Breast epithelium (tissue), 4 donors: ENCODE measurements at regions of chr6 and their contacts with region 1.

Region 1: GRCh38 chr6:29131691-29132090 is 23.8 kb downstream of the OR2J3 start:
- DNase-seq: no peak
- H3K4me3 ChIP-seq: no peak overlapping the region
- H3K27ac ChIP-seq: no peak overlapping the region
- H3K4me1 ChIP-seq: no peaks in the 10 kb centered on the region
- H3K27me3 ChIP-seq: no peaks in the 10 kb centered on the region
- CTCF ChIP-seq: no peak
- POLR2A ChIP-seq: no peak

Region 2: GRCh38 chr6:29146154-29146553 is 14.5 kb after region 1 on chr6:
- intact Hi-C with region 1: loop called (anchors 1 kb)
- DNase-seq: no peak
- H3K4me3 ChIP-seq: no peak overlapping the region
- H3K27ac ChIP-seq: no peak overlapping the region
- H3K4me1 ChIP-seq: no peaks in the 10 kb centered on the region
- H3K27me3 ChIP-seq: no peaks in the 10 kb centered on the region
- CTCF ChIP-seq: no peak
- POLR2A ChIP-seq: no peak

Region 3: GRCh38 chr6:30883685-30884520 is 1752.2 kb after region 1 on chr6 and contains the start of gene DDR1:
- intact Hi-C with region 1: no loop called
- DNase-seq: peak; percentile 87 to 91
- H3K4me3 ChIP-seq: peak within 1 kb of the TSS; percentile 71 to 93 (median 84)
- H3K27ac ChIP-seq: peak within 1 kb of the TSS; percentile 98
- H3K4me1 ChIP-seq: peaks cover 7 to 12% of the 10 kb centered on the region in 2 donors
- H3K27me3 ChIP-seq: no peaks in the 10 kb centered on the region
- CTCF ChIP-seq: peak in 1 of 3 donors; percentile 38
- POLR2A ChIP-seq: peak; percentile 27
- total RNA-seq, gene DDR1: 18.1 to 149 (median 72.1) TPM